ENCODE measurements at regions of chr1 and their contacts with region 1.

Region 1: GRCh38 chr1:226827968-226828513 is 42.4 kb upstream of the PSEN2 start:
- DNase-seq: peak; percentile 99
- H3K4me3 Mint-ChIP-seq: peak overlapping the region; percentile 64
- H3K27ac Mint-ChIP-seq: peak overlapping the region; percentile 90
- H3K4me1 Mint-ChIP-seq: peaks cover 35% of the 10 kb centered on the region
- H3K27me3 Mint-ChIP-seq: no peaks in the 10 kb centered on the region

Region 2: DNA sequence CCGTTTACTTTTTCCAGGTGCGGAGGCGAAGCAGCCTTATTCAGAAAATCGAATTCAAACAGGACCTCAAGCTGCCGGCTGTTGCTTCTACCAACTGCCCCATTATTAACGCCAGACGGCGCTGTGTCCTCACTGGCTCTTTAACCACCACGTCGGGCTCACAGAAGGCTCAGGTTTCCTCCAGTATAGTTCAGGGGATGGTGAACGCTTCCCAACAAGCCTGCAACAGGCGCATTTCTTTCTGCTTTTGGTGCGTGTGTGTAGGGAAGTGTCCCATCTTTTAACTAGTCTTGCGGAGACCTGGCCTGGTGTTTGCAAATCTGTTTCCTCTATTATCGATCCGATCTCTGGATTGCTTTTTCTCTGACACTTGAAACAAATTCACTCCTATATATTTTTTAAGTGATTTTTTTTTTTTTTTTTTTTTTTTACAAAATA is 280.3 kb before region 1 on chr1:
- CTCF ChIA-PET with region 1: no interaction called
- intact Hi-C with region 1: loop called (anchors 5 kb)
- DNase-seq: peak; percentile 82
- H3K4me3 Mint-ChIP-seq: no peak overlapping the region
- H3K27ac Mint-ChIP-seq: no peak overlapping the region
- H3K4me1 Mint-ChIP-seq: peaks cover 10% of the 10 kb centered on the region
- H3K27me3 Mint-ChIP-seq: peaks cover 33% of the 10 kb centered on the region

Region 3: GRCh38 chr1:226634166-226634588 is 193.9 kb before region 1 on chr1:
- CTCF ChIA-PET with region 1: interaction called, 44 read pairs
- intact Hi-C with region 1: loop called (anchors 1 kb)
- DNase-seq: peak; percentile 87
- H3K4me3 Mint-ChIP-seq: no peak overlapping the region
- H3K27ac Mint-ChIP-seq: peak overlapping the region; percentile 3
- H3K4me1 Mint-ChIP-seq: peaks cover 46% of the 10 kb centered on the region
- H3K27me3 Mint-ChIP-seq: no peaks in the 10 kb centered on the region

Region 4: GRCh38 chr1:226649780-226650179 is 178.3 kb before region 1 on chr1:
- CTCF ChIA-PET with region 1: interaction called, 3 read pairs
- intact Hi-C with region 1: loop called (anchors 1 kb)
- DNase-seq: peak; percentile 67
- H3K4me3 Mint-ChIP-seq: no peak overlapping the region
- H3K27ac Mint-ChIP-seq: no peak overlapping the region
- H3K4me1 Mint-ChIP-seq: peaks cover 53% of the 10 kb centered on the region
- H3K27me3 Mint-ChIP-seq: no peaks in the 10 kb centered on the region

Region 5: DNA sequence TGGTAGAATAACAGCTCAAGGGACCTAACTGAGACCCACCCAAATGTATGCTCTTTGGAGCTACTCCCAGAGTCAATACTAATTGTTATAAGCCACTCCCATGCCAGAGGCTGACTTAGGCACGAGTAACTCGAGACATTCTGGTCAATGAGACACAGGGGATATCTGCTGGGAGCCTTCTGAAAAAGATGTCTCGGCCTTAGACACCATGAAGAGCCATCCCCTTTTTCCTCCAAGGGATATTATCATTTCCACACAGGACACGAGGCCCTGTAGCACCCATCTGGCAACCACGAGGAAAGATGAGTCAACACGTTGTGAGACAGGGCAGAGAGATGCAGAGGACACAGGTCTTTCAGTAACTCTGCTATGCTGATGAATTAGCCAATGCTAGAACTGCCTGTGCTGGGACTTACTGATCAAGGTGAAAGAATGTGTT is 119.7 kb before region 1 on chr1:
- CTCF ChIA-PET with region 1: interaction called, 6 read pairs
- intact Hi-C with region 1: loop called (anchors 1 kb)
- DNase-seq: peak; percentile 66
- H3K4me3 Mint-ChIP-seq: peak overlapping the region; percentile 71
- H3K27ac Mint-ChIP-seq: peak overlapping the region; percentile 99
- H3K4me1 Mint-ChIP-seq: peaks cover 90% of the 10 kb centered on the region
- H3K27me3 Mint-ChIP-seq: no peaks in the 10 kb centered on the region

Region 6: DNA sequence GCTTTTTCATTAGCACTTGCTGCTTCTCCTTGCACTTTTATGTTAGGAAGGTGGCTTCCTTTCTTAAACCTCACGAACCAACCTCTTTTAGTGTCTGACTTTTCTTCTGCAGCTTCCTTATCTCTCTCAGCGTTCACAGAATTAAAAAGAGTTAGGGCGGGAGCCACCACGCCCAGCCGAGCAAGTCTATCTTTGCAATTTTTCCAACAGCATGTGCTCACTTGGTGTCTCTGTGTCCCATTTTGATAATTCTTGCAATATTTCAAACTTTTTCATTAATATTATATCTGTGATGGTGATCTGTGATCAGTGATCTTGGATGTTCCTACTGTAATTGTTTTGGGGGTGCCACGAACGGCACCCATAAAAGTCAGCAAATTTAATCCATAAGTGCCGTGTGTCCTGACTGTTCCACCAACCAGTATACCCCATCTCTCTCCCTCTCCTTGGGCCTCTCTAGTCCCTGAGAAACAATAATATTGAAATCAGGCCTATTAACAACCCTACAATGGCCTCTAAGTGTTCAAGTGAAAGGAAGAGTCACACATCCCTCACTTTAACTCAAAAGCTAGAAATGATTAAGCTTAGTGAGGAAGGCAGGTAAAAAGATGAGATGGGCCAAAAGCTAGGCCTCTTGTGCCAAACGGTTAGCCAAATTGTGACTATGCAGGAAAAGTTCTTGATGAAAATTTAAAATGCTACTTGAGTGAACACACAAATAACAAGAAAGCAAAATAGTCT is 73.1 kb before region 1 on chr1:
- CTCF ChIA-PET with region 1: interaction called, 4 read pairs
- intact Hi-C with region 1: loop called (anchors 5 kb)
- DNase-seq: peak; percentile 25
- H3K4me3 Mint-ChIP-seq: no peak overlapping the region
- H3K27ac Mint-ChIP-seq: no peak overlapping the region
- H3K4me1 Mint-ChIP-seq: peaks cover 22% of the 10 kb centered on the region
- H3K27me3 Mint-ChIP-seq: no peaks in the 10 kb centered on the region

Region 7: DNA sequence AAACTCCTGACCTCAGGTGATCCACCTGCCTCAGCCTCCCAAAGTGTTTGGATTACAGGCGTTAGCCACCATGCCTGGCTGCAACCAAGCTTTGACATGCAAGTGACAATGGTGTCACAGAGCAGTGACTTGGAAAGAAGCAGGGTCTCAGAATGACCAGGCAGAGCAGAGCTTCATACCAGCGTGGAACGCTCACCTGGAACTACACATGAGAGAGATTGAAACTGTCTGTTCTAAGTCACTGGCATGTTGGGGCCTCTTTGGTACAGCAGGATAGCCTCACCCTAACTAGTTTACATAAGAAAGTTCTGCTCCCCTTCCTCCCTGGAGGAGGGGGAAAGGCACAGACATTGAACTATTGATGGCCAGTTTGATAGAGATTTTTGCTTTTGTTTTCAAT is 41.5 kb before region 1 on chr1:
- CTCF ChIA-PET with region 1: no interaction called
- intact Hi-C with region 1: no loop called
- DNase-seq: no peak
- H3K4me3 Mint-ChIP-seq: no peak overlapping the region
- H3K27ac Mint-ChIP-seq: no peak overlapping the region
- H3K4me1 Mint-ChIP-seq: peaks cover 11% of the 10 kb centered on the region
- H3K27me3 Mint-ChIP-seq: no peaks in the 10 kb centered on the region

Region 8: DNA sequence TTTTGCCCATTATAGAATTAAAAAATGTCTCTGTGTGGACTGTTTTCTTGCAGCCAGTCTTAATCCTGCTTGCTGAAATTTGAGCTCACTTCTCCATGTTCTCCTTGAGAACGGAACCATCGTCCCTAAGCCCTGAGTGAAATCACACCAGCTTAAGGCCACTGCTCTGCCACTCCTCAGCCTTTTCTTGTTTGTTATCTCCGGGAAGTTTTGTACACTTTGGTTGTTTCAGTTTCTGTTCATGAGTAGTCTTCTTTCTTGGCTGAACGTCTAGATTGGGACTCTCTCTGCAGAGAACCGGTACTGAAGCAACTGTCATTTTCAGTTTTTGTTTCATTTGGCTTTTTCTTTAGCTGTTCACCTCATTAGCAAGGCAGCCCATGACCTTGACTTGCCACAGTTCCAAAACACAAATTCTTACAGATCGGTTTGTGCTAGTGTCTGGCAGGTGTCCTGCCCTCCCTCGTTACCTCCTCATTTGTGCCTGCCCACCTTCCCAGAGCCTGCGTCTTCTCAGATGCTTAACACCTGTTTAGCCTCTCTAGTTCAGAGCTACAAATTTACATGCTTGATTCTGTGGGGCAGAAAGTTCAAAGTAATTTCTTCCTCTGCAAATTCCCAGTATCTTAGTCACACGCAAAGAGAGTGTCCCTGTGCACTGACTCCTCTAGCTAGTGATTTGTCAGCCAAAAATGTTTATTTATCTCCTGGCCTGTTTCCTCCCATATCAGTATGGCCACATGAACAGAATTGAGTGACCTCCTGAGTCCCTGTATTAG is 54.8 kb after region 1 on chr1:
- CTCF ChIA-PET with region 1: no interaction called
- intact Hi-C with region 1: loop called (anchors 2 kb)
- DNase-seq: peak; percentile 57
- H3K4me3 Mint-ChIP-seq: peak overlapping the region; percentile 74
- H3K27ac Mint-ChIP-seq: peak overlapping the region; percentile 93
- H3K4me1 Mint-ChIP-seq: peaks cover 51% of the 10 kb centered on the region
- H3K27me3 Mint-ChIP-seq: no peaks in the 10 kb centered on the region

Measured in activated naive CD4-positive, alpha-beta T cell treated with anti-CD3 and anti-CD28 coated beads for 36 hours (primary cell).